Left ventricle myocardium superior (tissue), 1 donor: ENCODE measurements at regions of chr2 and their contacts with region 1.

Region 1: GRCh38 chr2:11688222-11689069 is 18.5 kb upstream of the NTSR2 start:
- DNase-seq: peak; percentile 87
- ATAC-seq: peak; percentile 87

Region 2: GRCh38 chr2:11778923-11779757 is 90.7 kb after region 1 on chr2:
- intact Hi-C with region 1: loop called (anchors 5 kb)
- DNase-seq: peak; percentile 89
- ATAC-seq: peak; percentile 92

Region 3: GRCh38 chr2:11842336-11842735 is 153.9 kb after region 1 on chr2:
- intact Hi-C with region 1: no loop called
- DNase-seq: peak; percentile 41
- ATAC-seq: peak; percentile 55